CD4-positive, alpha-beta memory T cell (primary cell): ENCODE measurements at regions of chr18 and their contacts with region 1.

Region 1: DNA sequence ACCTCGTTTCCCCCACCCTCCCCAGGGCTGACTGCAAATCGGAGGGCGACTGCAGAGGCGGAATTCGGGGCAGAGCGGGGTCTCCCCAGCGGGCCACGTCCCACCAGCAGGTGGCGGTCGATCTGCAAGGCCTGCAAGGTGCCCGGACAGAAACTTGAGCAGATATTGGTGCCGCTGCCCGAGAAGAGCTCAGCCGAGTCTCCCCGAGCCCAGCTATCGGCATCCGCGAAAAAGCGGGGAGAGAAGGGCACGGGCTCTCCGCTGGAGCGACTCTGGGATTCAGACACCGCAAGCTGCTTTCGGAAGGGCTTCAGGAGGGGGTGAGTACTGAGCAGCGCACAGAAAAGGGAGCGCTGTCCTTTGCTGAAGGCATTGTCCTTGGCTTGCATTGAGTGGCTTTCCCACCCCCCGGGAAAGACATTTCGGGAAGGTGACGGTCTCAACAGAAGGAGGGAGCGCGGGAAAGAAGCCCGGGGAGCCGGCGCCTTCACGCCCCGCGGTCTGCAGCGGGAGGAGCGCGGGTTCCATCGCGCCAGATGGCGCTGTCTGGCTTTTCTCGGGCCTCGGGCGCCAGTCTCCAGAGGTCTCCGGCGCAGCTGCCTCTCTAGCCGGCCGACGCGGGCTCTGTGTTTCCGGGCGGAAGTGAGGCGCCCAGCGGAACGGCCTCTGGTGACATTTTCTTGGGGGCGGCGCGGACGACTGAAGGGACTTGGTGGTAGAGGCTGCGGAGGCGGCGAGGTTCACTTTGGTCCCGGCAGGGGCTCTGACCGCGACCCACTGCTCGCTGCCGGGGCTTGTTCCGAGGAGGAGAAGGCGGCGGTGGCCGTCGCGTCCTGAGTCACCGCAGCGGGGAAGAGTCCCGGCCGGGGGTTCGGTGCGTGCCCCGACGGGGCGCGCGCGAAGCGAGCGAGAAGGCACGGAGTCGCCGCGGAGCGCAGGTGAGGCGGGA is 69.5 kb downstream of the HAUS1 start:
- DNase-seq: peak; percentile 90 to 94 (median 91)
- H3K4me3 ChIP-seq: peak overlapping the region; percentile 93 to 100
- H3K4me3 Mint-ChIP-seq: peak overlapping the region; percentile 97 to 99 (median 98)
- H3K27ac ChIP-seq: peak overlapping the region; percentile 91
- H3K27ac Mint-ChIP-seq: peak overlapping the region; percentile 96 to 100 (median 99)
- H3K4me1 ChIP-seq: peaks cover 42% of the 10 kb centered on the region
- H3K4me1 Mint-ChIP-seq: peaks cover 20 to 67% (median 28%) of the 10 kb centered on the region in 4 donors
- H3K27me3 ChIP-seq: no peaks in the 10 kb centered on the region
- H3K27me3 Mint-ChIP-seq: no peaks in the 10 kb centered on the region

Region 2: DNA sequence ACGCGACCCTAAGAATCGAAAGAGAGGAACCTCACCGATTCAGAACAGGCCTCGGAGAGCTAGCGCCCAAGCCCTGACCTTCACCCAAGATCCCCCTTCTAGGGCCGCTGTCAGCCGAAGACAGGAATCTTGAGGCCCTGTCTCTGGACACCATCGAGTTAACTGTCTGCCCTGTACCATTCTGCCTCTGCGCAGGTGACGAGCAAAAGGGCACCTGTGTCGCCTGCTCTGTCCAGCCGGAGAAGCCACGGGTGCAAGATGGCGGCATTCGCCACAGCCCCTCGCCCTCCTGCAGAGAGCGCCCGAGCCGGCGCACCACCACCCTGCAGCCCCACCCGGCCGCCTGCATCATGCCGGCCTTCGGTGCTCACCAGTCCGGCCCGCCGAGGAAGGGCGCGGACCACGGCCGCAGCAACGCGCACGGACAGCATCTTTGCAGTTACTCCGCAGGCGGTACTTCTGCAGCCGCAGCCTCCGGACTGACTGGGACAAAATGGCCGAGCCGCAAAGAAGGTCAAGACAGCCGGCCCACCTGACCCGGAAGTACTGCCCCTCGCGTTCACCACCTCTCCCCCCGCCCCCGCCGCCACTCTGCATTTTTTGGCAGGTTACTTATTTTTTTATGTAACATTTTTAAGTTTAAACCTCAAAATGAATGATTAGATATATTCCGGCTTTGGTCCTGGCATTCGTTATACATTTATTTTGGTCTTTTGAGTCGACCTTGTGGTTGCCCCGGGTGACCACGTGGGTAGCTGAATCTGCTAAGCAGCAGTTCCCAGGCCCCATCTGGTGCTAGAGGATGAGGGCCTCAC is 75.7 kb before region 1 on chr18 and contains the start of gene ATP5F1A:
- CTCF ChIA-PET with region 1: interaction called, 15 read pairs
- POLR2A ChIA-PET with region 1: interaction called, 6 read pairs
- intact Hi-C with region 1: loop called (anchors 1 kb)
- DNase-seq: peak; percentile 82 to 90 (median 86)
- H3K4me3 ChIP-seq: peak within 1 kb of the TSS; percentile 39 to 95
- H3K4me3 Mint-ChIP-seq: peak within 1 kb of the TSS; percentile 92 to 99 (median 98)
- H3K27ac ChIP-seq: peak within 1 kb of the TSS; percentile 93
- H3K27ac Mint-ChIP-seq: peak within 1 kb of the TSS; percentile 94 to 99 (median 98)
- H3K4me1 ChIP-seq: peaks cover 47% of the 10 kb centered on the region
- H3K4me1 Mint-ChIP-seq: peaks cover 14 to 40% (median 25%) of the 10 kb centered on the region in 4 donors
- H3K27me3 ChIP-seq: no peaks in the 10 kb centered on the region
- H3K27me3 Mint-ChIP-seq: no peaks in the 10 kb centered on the region
- total RNA-seq, gene ATP5F1A: 212 to 225 TPM

Region 3: GRCh38 chr18:46148810-46149209 is 24.9 kb before region 1 on chr18:
- CTCF ChIA-PET with region 1: interaction called, 57 read pairs
- POLR2A ChIA-PET with region 1: interaction called, 6 read pairs
- intact Hi-C with region 1: loop called (anchors 1 kb)
- DNase-seq: peak; percentile 50 to 64 (median 55)
- H3K4me3 ChIP-seq: no peak overlapping the region
- H3K4me3 Mint-ChIP-seq: peak overlapping the region in 4 of 8 donors; percentile 5 to 53 (median 17)
- H3K27ac ChIP-seq: no peak overlapping the region
- H3K27ac Mint-ChIP-seq: peak overlapping the region in 6 of 7 donors; percentile 21 to 86 (median 68)
- H3K4me1 ChIP-seq: peaks cover 47% of the 10 kb centered on the region
- H3K4me1 Mint-ChIP-seq: peaks cover 21 to 44% (median 34%) of the 10 kb centered on the region in 4 donors
- H3K27me3 ChIP-seq: no peaks in the 10 kb centered on the region
- H3K27me3 Mint-ChIP-seq: no peaks in the 10 kb centered on the region

Region 4: GRCh38 chr18:46199515-46200147 is 26.0 kb after region 1 on chr18:
- CTCF ChIA-PET with region 1: interaction called, 22 read pairs
- POLR2A ChIA-PET with region 1: no interaction called
- intact Hi-C with region 1: no loop called
- DNase-seq: no peak
- H3K4me3 ChIP-seq: no peak overlapping the region
- H3K4me3 Mint-ChIP-seq: peak overlapping the region in 5 of 8 donors; percentile 2 to 35 (median 27)
- H3K27ac ChIP-seq: no peak overlapping the region
- H3K27ac Mint-ChIP-seq: peak overlapping the region; percentile 37 to 71 (median 44)
- H3K4me1 ChIP-seq: peaks cover 68% of the 10 kb centered on the region
- H3K4me1 Mint-ChIP-seq: peaks cover 47 to 78% (median 62%) of the 10 kb centered on the region in 4 donors
- H3K27me3 ChIP-seq: no peaks in the 10 kb centered on the region
- H3K27me3 Mint-ChIP-seq: no peaks in the 10 kb centered on the region

Region 5: GRCh38 chr18:46226461-46226860 is 52.8 kb after region 1 on chr18:
- CTCF ChIA-PET with region 1: interaction called, 22 read pairs
- POLR2A ChIA-PET with region 1: no interaction called
- intact Hi-C with region 1: no loop called
- DNase-seq: no peak
- H3K4me3 ChIP-seq: no peak overlapping the region
- H3K4me3 Mint-ChIP-seq: peak overlapping the region in 2 of 8 donors; percentile 24 to 53
- H3K27ac ChIP-seq: no peak overlapping the region
- H3K27ac Mint-ChIP-seq: peak overlapping the region in 3 of 7 donors; percentile 28 to 41 (median 32)
- H3K4me1 ChIP-seq: peaks cover 89% of the 10 kb centered on the region
- H3K4me1 Mint-ChIP-seq: peaks cover 37 to 93% (median 60%) of the 10 kb centered on the region in 4 donors
- H3K27me3 ChIP-seq: no peaks in the 10 kb centered on the region
- H3K27me3 Mint-ChIP-seq: no peaks in the 10 kb centered on the region

Region 6: GRCh38 chr18:46273829-46274228 is 100.2 kb after region 1 on chr18:
- CTCF ChIA-PET with region 1: interaction called, 41 read pairs
- POLR2A ChIA-PET with region 1: no interaction called
- intact Hi-C with region 1: no loop called
- DNase-seq: no peak
- H3K4me3 ChIP-seq: no peak overlapping the region
- H3K4me3 Mint-ChIP-seq: no peak overlapping the region
- H3K27ac ChIP-seq: no peak overlapping the region
- H3K27ac Mint-ChIP-seq: peak overlapping the region in 3 of 7 donors; percentile 11 to 69 (median 56)
- H3K4me1 ChIP-seq: peaks cover 8% of the 10 kb centered on the region
- H3K4me1 Mint-ChIP-seq: peaks cover 17 to 23% (median 21%) of the 10 kb centered on the region in 4 donors
- H3K27me3 ChIP-seq: no peaks in the 10 kb centered on the region
- H3K27me3 Mint-ChIP-seq: no peaks in the 10 kb centered on the region

Region 7: GRCh38 chr18:46622999-46623398 is 449.3 kb after region 1 on chr18:
- CTCF ChIA-PET with region 1: interaction called, 15 read pairs
- POLR2A ChIA-PET with region 1: interaction called, 5 read pairs
- intact Hi-C with region 1: loop called (anchors 1 kb)
- DNase-seq: no peak
- H3K4me3 ChIP-seq: no peak overlapping the region
- H3K4me3 Mint-ChIP-seq: peak overlapping the region in 4 of 8 donors; percentile 3 to 58 (median 21)
- H3K27ac ChIP-seq: no peak overlapping the region
- H3K27ac Mint-ChIP-seq: peak overlapping the region in 1 of 7 donors; percentile 61
- H3K4me1 ChIP-seq: peaks cover 16% of the 10 kb centered on the region
- H3K4me1 Mint-ChIP-seq: peaks cover 12 to 30% (median 19%) of the 10 kb centered on the region in 4 donors
- H3K27me3 ChIP-seq: no peaks in the 10 kb centered on the region
- H3K27me3 Mint-ChIP-seq: peaks cover 1 to 4% of the 10 kb centered on the region in 2 donors